ENCODE measurements at regions of chr16 and their contacts with region 1.

Region 1: DNA sequence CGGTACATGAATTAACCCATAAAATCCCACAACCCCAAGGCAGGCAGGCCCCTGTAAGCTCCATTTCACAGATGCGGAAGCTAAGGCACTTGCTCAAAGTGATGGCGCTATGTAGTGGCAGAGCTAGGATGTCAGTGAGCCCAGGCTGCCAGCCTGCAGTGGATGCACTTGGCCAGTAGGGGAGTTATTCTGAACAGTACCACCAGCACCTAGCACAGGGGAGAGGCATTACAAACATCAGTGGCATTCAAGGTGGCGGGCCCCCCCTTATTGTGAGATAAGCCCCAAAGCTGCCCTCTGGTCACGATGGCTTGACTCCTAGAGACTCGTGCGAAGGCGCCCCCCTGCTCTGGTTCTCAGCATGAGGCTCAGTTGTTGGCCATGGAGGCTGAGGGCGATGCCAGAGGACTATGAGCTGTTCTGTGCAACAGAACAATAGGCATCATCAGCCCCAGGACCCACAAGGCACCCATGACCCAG is 33.8 kb downstream of the GTF3C1 start:
- DNase-seq: peak; percentile 59
- CTCF ChIP-seq: peak; percentile 51

Region 2: DNA sequence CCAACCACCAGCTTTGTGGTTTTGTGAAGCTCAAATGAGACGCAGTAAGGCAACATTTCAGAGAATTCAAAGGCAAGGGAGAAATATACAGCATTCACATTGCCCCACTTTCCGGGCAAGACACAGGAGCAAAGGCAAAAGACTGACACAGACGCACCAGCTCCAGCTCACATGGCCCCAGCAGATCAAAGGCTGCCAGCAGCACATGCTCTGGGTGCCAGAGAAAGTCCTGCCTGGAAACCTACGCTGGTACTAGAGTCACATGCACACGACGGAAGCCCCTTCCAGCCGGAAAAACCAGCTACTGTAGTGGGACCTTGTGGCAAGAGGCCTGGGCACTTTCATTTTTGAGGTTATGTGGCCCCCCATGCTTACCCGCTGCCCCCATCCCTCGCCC is 16.3 kb before region 1 on chr16:
- CTCF ChIA-PET with region 1: interaction called, 13 read pairs
- POLR2A ChIA-PET with region 1: no interaction called
- DNase-seq: no peak
- CTCF ChIP-seq: no peak

Region 3: DNA sequence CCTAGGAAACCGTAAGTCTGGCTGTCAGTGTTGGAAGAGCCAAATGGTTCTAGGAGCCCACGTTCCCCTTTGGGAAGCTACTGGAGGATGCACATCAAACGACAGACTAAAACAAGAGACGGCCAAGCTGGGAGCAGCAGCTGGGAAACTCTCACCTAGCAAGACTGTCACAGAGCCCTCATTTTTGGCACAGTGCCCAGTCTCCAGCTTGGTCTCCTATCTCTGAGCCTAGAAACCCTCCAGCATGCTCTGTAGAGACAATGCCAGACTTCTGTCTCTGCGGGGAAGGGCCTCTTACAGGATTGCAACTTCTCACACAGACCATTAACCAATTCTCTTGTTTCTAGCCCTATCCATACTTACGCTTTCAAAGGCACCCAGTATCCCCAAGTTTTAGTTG is 10.3 kb after region 1 on chr16:
- CTCF ChIA-PET with region 1: interaction called, 12 read pairs
- POLR2A ChIA-PET with region 1: no interaction called
- DNase-seq: no peak
- CTCF ChIP-seq: no peak

Measured in GM10248 (cell line).